ENCODE measurements at regions of chr14 and their contacts with region 1.

Region 1: DNA sequence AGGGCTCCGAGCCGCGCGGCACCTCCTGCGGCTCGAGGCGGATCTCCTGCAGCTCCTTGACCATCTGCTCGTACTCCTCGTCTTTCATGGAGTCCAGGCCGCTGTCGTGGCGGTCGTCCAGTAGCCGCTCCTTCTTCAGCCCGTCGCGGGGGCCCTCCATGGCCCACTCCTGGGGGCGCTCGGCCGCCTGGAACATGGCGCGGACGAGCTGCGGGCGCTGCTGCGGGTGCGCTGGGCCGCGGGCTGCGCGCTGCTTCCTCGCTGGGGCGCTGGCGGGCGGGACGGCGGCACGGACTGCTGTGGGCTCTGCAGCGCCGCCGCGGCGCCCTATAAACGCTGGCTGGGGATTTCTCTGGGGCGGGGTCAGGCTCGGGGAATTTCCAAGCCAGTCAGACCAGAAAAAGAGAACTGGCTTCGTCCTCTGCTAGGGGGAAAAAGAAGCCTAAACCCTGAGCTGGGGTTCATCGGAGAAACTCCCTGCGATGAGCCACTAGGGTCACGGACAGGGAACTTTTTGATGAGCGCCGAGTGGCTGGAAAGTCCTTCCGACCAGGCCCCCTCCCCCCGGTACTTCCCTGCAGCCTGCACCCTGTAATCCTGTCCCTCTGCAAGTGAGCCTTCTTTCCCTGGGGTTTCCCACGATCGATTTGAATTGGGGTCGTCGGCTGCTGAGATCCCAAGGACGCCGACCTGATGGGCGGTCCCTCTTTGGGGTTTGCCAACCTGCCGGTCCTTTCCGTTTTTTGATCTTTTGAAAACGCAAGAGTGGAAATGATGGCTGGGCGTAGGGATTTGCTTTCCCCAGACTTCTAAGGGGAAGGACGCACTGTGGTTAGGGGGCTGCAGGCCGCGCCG is at the start of gene NFKBIA:
- DNase-seq: peak; percentile 90 to 98 (median 92)
- ATAC-seq: peak; percentile 72
- H3K4me3 ChIP-seq: peak within 1 kb of the TSS; percentile 89 to 100
- H3K27ac ChIP-seq: peak within 1 kb of the TSS; percentile 99
- H3K4me1 ChIP-seq: peaks cover 35 to 47% of the 10 kb centered on the region in 2 donors
- H3K27me3 ChIP-seq: no peaks in the 10 kb centered on the region
- CTCF ChIP-seq: peak in 1 of 2 donors; percentile 49
- polyA plus RNA-seq, gene NFKBIA: 74.7 to 156 (median 97.9) TPM

Region 2: DNA sequence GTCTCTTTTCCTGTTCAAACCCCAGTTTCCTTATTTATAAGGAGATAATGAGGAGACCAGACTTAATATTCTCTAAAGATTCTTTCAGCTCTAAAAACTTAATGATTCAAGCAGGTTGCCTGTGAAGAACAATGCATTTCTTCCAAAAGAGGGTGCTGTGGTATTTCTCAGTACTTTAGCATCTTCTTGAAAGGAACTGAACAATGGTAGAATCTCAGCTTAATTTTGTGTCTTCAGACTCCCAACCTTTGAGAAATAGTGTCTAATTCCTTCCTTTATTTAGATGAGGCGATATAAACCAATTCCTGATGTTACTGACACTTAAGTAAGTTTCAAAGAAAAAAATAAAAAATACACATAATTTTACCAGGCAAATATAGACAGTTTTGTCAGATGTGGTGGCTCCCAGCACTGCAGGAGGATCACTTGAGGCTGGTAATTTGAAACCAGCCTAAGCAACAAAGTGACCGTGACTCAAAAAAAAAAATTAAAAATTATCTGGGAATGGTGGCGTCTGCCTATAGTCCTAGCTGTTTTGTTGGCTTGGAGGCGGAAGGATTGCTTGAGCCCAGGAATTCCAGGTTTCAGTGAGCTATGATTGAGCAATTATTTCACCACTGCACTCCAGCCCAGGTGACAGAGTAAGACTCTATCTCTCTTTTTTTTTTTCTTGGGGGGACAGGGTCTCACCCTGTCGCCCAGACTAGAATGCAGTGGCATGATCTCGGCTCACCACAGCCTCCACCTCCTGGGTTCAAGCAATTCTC is 189.4 kb before region 1 on chr14:
- intact Hi-C with region 1: loop called in 1 of 2 experiments (anchors 10 kb)
- DNase-seq: peak in 2 of 4 donors; percentile 43 to 57
- ATAC-seq: peak; percentile 87
- H3K4me3 ChIP-seq: no peak overlapping the region
- H3K27ac ChIP-seq: no peak overlapping the region
- H3K4me1 ChIP-seq: peaks cover 5 to 17% of the 10 kb centered on the region in 2 donors
- H3K27me3 ChIP-seq: no peaks in the 10 kb centered on the region
- CTCF ChIP-seq: peak in 1 of 2 donors; percentile 50

Region 3: GRCh38 chr14:35336494-35337268 is 68.0 kb before region 1 on chr14:
- intact Hi-C with region 1: loop called in 1 of 2 experiments (anchors 5 kb)
- DNase-seq: peak; percentile 68 to 95 (median 92)
- ATAC-seq: peak; percentile 75
- H3K4me3 ChIP-seq: no peak overlapping the region
- H3K27ac ChIP-seq: peak overlapping the region; percentile 85 to 94
- H3K4me1 ChIP-seq: peaks cover 58 to 100% of the 10 kb centered on the region in 2 donors
- H3K27me3 ChIP-seq: no peaks in the 10 kb centered on the region
- CTCF ChIP-seq: no peak

Measured in left lung (tissue), 14 donors.